Caco-2 (cell line): ENCODE measurements at regions of chr5 and their contacts with region 1.

Region 1: DNA sequence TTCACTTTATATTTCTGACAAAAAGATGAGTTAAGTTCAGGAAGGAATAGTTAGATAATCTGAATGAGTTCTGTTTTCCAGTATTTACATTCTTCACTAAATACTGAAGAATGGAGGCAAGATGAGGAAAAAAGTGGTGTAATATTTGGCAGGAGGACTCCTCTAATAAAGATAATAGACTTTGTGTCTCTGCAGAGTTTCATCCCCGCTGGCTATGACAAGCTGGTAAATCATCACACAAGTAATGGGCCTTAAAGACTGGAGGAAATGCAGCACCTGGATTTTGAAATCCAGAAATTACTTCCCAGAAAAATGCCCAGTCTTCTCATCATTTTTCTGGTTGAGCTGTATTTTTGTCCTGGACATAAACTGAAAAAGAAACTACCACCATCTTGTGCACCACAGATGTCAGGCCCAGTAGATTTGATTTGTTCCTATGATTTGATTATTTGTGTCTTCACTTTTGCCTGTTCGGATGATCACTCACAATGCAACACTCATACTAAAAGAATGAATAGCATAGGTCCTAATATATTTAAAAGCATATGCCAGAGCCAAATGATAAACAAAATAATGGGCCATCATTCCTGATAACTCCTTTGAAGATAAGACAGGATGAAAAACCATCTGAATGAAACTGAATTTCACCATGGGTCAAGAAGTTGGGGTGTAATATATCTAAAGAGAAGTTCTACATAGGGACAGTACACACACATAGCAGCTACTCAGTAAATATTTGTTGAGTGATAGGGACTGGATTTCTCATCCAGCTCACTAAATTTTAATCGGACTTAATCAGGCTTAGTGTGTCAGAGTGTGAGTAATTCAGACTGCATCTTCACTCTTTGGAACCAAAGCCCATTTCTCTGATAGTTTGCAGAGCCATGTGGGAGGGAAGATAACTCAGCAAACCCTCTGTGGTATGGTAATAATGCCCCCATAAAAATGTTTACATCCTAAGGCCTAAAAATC is 200.5 kb downstream of the HINT1 start:
- DNase-seq: no peak
- H3K4me3 ChIP-seq: no peak overlapping the region
- H3K4me3 Mint-ChIP-seq: no peak overlapping the region
- H3K27ac Mint-ChIP-seq: no peak overlapping the region
- H3K4me1 ChIP-seq: peaks cover 12% of the 10 kb centered on the region
- H3K4me1 Mint-ChIP-seq: peaks cover 10% of the 10 kb centered on the region
- H3K27me3 ChIP-seq: no peaks in the 10 kb centered on the region
- H3K27me3 Mint-ChIP-seq: no peaks in the 10 kb centered on the region
- CTCF ChIP-seq: no peak

Region 2: DNA sequence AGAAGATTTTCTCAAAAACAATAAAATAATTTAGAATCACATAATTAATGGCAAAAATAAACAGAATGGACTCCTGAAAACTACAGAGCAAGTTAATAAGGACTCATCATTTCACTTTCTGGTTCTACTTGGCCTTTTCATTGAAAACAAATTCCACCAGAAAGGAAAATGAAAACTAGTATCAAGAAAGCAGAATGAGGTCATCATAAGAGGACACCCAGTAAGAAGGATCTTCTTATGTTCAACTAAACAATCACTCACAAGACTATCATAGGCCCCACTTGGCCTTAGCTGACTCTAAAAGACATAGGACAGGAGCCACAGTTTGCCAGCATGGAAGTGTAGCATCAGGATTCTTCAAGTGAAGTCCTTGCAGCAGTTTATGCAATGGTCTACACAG is 133.7 kb before region 1 on chr5:
- CTCF ChIA-PET with region 1: no interaction called
- POLR2A ChIA-PET with region 1: no interaction called
- intact Hi-C with region 1: loop called (anchors 5 kb)
- DNase-seq: no peak
- H3K4me3 ChIP-seq: no peak overlapping the region
- H3K4me3 Mint-ChIP-seq: no peak overlapping the region
- H3K27ac Mint-ChIP-seq: peak overlapping the region; percentile 51
- H3K4me1 ChIP-seq: peaks cover 20% of the 10 kb centered on the region
- H3K4me1 Mint-ChIP-seq: no peaks in the 10 kb centered on the region
- H3K27me3 ChIP-seq: no peaks in the 10 kb centered on the region
- H3K27me3 Mint-ChIP-seq: no peaks in the 10 kb centered on the region
- CTCF ChIP-seq: no peak

Region 3: DNA sequence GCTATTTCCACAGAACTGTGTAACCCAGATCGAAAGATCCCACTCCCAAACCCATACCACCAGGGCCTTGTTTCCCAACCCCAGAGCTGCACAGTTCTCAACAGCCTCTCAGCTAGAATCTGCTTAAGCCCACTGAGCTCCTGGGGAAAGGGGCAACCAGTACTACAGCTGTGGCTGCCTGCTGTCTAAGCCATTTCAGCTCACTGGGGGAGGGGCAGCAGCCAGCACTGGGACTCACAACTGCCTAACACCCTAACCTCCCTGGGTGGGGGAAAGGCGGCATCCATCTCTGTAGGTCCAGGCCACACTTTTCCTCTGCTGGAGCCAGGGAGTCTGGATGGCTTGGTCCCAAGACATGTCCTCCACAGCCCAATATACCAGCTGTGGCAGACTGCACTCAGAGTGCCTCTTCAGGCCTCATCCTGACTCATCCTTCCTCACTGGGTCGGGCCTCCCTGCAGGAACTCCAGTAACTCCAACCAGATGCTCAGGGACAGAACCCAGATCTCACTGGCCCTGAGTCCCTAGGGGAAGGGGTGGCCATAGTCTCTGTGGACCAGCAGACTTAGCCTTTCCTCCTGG is 40.9 kb before region 1 on chr5:
- CTCF ChIA-PET with region 1: no interaction called
- POLR2A ChIA-PET with region 1: no interaction called
- intact Hi-C with region 1: no loop called
- DNase-seq: no peak
- H3K4me3 ChIP-seq: no peak overlapping the region
- H3K4me3 Mint-ChIP-seq: no peak overlapping the region
- H3K27ac Mint-ChIP-seq: no peak overlapping the region
- H3K4me1 ChIP-seq: no peaks in the 10 kb centered on the region
- H3K4me1 Mint-ChIP-seq: no peaks in the 10 kb centered on the region
- H3K27me3 ChIP-seq: no peaks in the 10 kb centered on the region
- H3K27me3 Mint-ChIP-seq: peaks cover 2% of the 10 kb centered on the region
- CTCF ChIP-seq: no peak